Posterior vena cava (tissue), 2 donors: ENCODE measurements at regions of chr10 and their contacts with region 1.

Region 1: GRCh38 chr10:89426230-89426868 is 12.0 kb downstream of the IFIT5 start:
- DNase-seq: no peak

Region 2: GRCh38 chr10:89563861-89564478 is 137.6 kb after region 1 on chr10:
- intact Hi-C with region 1: loop called (anchors 2 to 5 kb)
- DNase-seq: no peak